PC-3 (cell line): ENCODE measurements at regions of chr4 and their contacts with region 1.

Region 1: DNA sequence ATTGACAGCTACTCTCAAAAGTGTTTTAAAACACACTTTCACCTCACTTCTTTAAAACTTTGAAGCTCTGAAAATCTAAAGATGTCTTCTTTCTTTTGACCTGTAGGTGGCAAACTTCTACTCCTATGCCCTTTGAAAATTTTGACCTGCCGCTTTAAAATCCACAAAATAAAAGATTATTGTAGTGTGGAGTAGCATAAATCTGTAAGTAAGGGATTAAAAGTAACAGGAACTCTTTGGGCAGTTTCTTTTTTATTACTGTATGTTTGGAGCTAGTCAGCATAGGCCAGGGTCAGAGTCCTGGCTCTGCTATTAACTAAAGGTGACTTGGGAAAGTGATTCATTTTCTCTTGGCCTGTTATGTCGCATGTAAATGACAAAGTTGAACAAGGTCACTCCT is 25.5 kb downstream of the BBS12 start:
- DNase-seq: peak; percentile 61
- ATAC-seq: peak; percentile 90
- H3K4me3 ChIP-seq: no peak overlapping the region
- H3K27ac ChIP-seq: no peak overlapping the region
- H3K4me1 ChIP-seq: peaks cover 4% of the 10 kb centered on the region
- H3K27me3 ChIP-seq: no peaks in the 10 kb centered on the region
- CTCF ChIP-seq: peak; percentile 79

Region 2: DNA sequence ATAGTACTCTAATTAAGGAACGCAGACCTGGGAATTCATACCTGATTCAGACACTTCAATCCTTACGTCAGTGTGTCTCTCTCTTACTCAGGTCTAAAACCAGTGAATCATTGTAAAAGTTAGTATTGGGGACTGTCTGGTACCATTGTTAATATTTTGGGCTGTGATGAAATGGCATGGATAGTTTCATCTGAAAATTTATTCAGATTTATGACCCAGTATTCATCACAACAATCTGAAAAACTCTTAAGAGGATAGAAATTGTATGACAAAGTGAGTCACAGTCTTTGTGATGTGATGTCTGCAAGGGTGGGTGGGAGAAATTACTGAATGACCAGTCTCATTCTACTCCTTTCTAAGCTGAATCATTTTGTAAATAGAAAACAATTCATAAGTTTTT is 78.9 kb after region 1 on chr4:
- CTCF ChIA-PET with region 1: no interaction called
- POLR2A ChIA-PET with region 1: no interaction called
- intact Hi-C with region 1: no loop called
- DNase-seq: peak; percentile 72
- ATAC-seq: peak; percentile 88
- H3K4me3 ChIP-seq: no peak overlapping the region; the same call in 1 of the 2 replicates
- H3K27ac ChIP-seq: peak overlapping the region; percentile 75
- H3K4me1 ChIP-seq: peaks cover 19% of the 10 kb centered on the region
- H3K27me3 ChIP-seq: no peaks in the 10 kb centered on the region
- CTCF ChIP-seq: no peak

Region 3: DNA sequence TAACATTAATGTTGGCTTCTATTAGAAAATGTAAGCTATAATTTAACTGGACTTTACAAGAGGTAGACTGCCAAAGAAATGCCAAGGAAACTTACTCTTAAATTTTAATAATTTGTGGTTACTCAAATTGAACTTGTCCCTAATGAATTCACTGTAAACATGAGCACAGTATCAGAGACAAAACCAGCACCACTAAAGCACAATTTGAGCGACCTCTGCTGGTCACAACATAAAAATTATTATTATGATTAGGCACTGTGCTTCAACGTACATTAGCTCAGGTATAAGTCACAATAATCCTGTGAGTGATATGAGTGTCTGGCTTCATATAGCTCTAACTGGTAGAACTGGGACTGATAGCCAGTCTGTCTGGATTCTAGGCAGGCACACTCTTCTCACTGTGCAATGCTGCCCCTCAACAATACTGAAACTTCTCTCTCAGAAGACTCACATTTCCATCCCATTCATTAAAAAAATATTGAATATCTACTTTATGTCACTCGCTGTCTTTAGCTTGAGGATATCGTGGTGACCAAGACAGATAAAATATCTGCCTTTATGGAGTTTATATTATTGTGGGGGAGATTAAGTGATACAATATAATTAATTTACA is 156.4 kb after region 1 on chr4:
- CTCF ChIA-PET with region 1: interaction called, 27 read pairs
- POLR2A ChIA-PET with region 1: interaction called, 3 read pairs
- intact Hi-C with region 1: loop called (anchors 1 kb)
- DNase-seq: peak; percentile 58
- ATAC-seq: peak; percentile 78
- H3K4me3 ChIP-seq: no peak overlapping the region
- H3K27ac ChIP-seq: no peak overlapping the region
- H3K4me1 ChIP-seq: peaks cover 23% of the 10 kb centered on the region
- H3K27me3 ChIP-seq: no peaks in the 10 kb centered on the region
- CTCF ChIP-seq: peak; percentile 68

Region 4: DNA sequence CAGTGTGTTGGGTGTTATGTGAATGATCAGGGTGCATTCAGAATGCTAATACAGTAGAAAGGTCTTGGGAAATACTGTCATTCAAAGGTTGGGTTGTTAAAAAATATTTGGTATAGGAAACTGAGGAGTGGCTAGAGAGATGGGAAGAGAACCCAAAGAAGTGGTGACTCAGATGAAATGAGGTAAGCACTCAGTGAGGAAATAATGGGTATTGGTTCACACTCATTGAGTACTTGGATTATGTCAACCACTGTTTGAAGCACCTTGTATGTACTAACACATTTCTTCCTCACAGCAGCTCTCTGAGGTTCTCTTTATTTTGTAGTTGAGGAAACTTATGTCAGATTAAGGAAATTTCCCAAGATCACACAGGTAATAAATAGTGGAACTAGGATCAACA is 205.2 kb after region 1 on chr4:
- CTCF ChIA-PET with region 1: no interaction called
- POLR2A ChIA-PET with region 1: no interaction called
- intact Hi-C with region 1: no loop called
- DNase-seq: peak; percentile 32
- ATAC-seq: no peak
- H3K4me3 ChIP-seq: no peak overlapping the region
- H3K27ac ChIP-seq: no peak overlapping the region
- H3K4me1 ChIP-seq: peaks cover 4% of the 10 kb centered on the region
- H3K27me3 ChIP-seq: no peaks in the 10 kb centered on the region
- CTCF ChIP-seq: no peak